CD4-positive, alpha-beta T cell (primary cell): ENCODE measurements at regions of chr17 and their contacts with region 1.

Region 1: GRCh38 chr17:8109661-8110464 is 8.5 kb downstream of the ALOXE3 start:
- DNase-seq: peak; percentile 76 to 91 (median 82)
- ATAC-seq: peak; percentile 99
- H3K4me3 ChIP-seq: peak overlapping the region; percentile 61
- H3K4me3 Mint-ChIP-seq: peak overlapping the region; percentile 45
- H3K27ac ChIP-seq: no peak overlapping the region
- H3K27ac Mint-ChIP-seq: peak overlapping the region; percentile 12
- H3K4me1 ChIP-seq: peaks cover 13% of the 10 kb centered on the region
- H3K4me1 Mint-ChIP-seq: peaks cover 4% of the 10 kb centered on the region
- H3K27me3 ChIP-seq: peaks cover 10 to 11% of the 10 kb centered on the region in 2 experiments
- H3K27me3 Mint-ChIP-seq: peaks cover 26% of the 10 kb centered on the region
- CTCF ChIP-seq: peak; percentile 97

Region 2: DNA sequence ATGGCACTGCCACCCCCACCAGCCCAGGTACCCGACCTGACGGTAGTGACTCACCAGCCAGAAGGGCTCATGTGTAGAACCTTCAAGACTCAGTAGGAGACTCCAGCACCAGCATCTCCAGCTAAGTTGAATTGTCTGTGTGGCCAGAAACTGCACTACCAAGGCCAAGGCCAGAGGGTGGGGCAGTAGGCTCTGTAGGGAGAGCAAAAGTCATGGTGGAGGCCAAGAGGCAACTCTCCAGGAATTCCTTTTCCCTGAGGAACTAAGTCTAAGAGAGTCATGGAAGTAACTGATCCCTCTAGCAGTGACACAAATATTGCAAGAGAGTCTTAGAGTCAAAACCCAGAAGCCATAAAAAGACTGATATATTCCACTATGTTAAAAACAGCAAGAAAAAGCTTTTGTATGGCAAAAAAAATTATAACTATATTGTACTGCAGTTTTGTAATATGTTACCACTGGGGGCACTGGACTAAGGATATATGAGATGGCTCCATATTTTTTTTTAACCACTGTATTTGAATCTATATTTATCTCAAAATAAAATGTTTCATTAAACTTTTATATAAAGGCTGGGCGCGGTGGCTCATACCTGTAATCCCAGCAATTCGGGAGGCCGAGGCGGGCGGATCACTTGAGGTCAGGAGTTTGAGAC is 137.6 kb before region 1 on chr17:
- CTCF ChIA-PET with region 1: no interaction called
- POLR2A ChIA-PET with region 1: no interaction called
- intact Hi-C with region 1: no loop called
- DNase-seq: no peak
- ATAC-seq: no peak
- H3K4me3 ChIP-seq: no peak overlapping the region
- H3K4me3 Mint-ChIP-seq: no peak overlapping the region
- H3K27ac ChIP-seq: no peak overlapping the region
- H3K27ac Mint-ChIP-seq: no peak overlapping the region
- H3K4me1 ChIP-seq: no peaks in the 10 kb centered on the region
- H3K4me1 Mint-ChIP-seq: no peaks in the 10 kb centered on the region
- H3K27me3 ChIP-seq: peaks cover 5 to 10% of the 10 kb centered on the region in 2 experiments
- H3K27me3 Mint-ChIP-seq: peaks cover 6% of the 10 kb centered on the region
- CTCF ChIP-seq: no peak

Region 3: DNA sequence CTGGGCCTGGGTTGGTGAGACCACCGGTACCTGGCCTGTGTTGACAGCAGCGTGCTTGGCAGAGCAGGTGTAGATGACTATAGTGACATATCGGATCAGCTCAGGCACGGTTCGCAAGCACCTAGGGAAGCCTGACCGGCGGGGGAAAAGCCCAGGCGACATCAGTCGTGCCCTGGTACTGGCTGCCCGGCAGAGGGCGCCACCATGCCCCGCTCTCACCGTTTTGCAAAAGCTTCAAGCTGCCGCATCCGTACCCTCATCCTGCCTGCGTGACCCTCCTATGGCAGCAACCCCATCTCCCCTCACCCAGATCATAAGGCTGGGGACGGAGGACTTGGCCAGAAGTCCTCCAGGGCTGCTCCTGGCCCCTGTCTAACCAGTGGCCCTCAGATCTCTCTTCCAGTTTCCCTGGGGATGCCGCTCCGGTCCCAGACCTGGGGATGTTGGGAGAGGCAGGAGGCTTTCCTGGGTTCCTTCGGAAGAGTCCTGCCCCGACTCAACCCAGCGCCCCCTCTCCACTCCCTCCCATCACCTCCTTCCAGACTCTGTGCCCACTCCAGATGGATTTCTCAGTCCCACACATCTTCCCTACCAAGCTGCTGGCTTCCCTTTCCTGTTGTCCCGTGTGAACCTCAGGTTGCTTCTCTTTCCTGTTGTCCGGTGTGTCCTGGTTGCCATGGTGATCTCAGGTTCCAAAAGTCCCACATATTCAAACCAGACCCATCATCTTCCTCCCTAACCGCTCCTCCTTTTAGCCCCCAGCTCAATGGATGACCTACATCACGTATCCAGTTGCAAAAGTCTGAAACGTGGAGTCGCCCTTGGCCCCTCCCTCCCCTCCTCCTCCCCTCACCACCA is 36.0 kb before region 1 on chr17:
- CTCF ChIA-PET with region 1: interaction called, 11 read pairs
- POLR2A ChIA-PET with region 1: interaction called, 4 read pairs
- intact Hi-C with region 1: no loop called
- DNase-seq: peak; percentile 75 to 95 (median 83)
- ATAC-seq: peak; percentile 94
- H3K4me3 ChIP-seq: peak overlapping the region; percentile 31
- H3K4me3 Mint-ChIP-seq: peak overlapping the region; percentile 87
- H3K27ac ChIP-seq: no peak overlapping the region
- H3K27ac Mint-ChIP-seq: peak overlapping the region; percentile 18
- H3K4me1 ChIP-seq: peaks cover 25% of the 10 kb centered on the region
- H3K4me1 Mint-ChIP-seq: peaks cover 26% of the 10 kb centered on the region
- H3K27me3 ChIP-seq: peaks cover 27 to 39% of the 10 kb centered on the region in 2 experiments
- H3K27me3 Mint-ChIP-seq: peaks cover 44% of the 10 kb centered on the region
- CTCF ChIP-seq: peak; percentile 91

Region 4: GRCh38 chr17:8079291-8080207 is 30.3 kb before region 1 on chr17:
- CTCF ChIA-PET with region 1: interaction called, 11 read pairs
- POLR2A ChIA-PET with region 1: interaction called, 4 read pairs
- intact Hi-C with region 1: loop called in 1 of 2 experiments (anchors 1 kb)
- DNase-seq: peak; percentile 66 to 92 (median 76)
- ATAC-seq: peak; percentile 80
- H3K4me3 ChIP-seq: peak overlapping the region; percentile 77
- H3K4me3 Mint-ChIP-seq: peak overlapping the region; percentile 92
- H3K27ac ChIP-seq: peak overlapping the region; percentile 52 to 70
- H3K27ac Mint-ChIP-seq: peak overlapping the region; percentile 76
- H3K4me1 ChIP-seq: peaks cover 20% of the 10 kb centered on the region
- H3K4me1 Mint-ChIP-seq: peaks cover 17% of the 10 kb centered on the region
- H3K27me3 ChIP-seq: peaks cover 4 to 6% of the 10 kb centered on the region in 2 experiments
- H3K27me3 Mint-ChIP-seq: peaks cover 7% of the 10 kb centered on the region
- CTCF ChIP-seq: peak; percentile 82

Region 5: DNA sequence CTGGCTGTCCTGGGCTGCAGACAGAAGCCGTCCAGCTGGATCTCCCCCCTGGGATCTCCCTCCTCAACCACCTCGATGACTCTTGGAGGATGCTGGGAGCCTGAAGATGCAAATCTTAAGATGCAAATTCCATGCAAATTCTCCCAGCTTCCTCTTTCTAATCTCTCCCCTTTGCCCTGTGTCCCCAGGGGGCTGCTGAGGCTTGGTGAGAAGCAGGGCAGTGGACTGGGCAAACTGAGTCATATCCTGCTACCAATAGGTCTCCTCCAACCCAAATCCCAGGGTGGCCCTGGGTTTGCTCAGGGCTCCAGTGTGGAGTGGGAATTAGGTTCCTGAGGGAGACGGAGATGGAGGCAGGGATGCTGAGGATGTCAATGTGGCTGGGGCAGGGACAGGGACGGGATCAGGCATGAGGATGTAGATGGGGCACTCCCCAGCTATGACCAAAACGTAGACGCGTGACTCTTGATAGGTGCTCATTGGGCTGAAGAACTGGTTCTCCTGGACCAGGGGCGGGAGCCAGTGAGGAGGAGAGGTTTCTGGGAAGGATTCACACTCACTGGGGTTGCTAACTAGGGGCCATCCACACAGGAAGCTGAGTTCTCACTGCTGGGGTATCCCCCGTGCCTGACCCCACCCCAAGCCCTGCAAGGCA is 18.7 kb before region 1 on chr17:
- CTCF ChIA-PET with region 1: interaction called, 12 read pairs
- POLR2A ChIA-PET with region 1: interaction called, 8 read pairs
- intact Hi-C with region 1: loop called (anchors 1 kb)
- DNase-seq: no peak
- ATAC-seq: no peak
- H3K4me3 ChIP-seq: no peak overlapping the region
- H3K4me3 Mint-ChIP-seq: no peak overlapping the region
- H3K27ac ChIP-seq: no peak overlapping the region
- H3K27ac Mint-ChIP-seq: no peak overlapping the region
- H3K4me1 ChIP-seq: peaks cover 13% of the 10 kb centered on the region
- H3K4me1 Mint-ChIP-seq: peaks cover 17% of the 10 kb centered on the region
- H3K27me3 ChIP-seq: peaks cover 4 to 8% of the 10 kb centered on the region in 2 experiments
- H3K27me3 Mint-ChIP-seq: peaks cover 26% of the 10 kb centered on the region
- CTCF ChIP-seq: no peak

Region 6: DNA sequence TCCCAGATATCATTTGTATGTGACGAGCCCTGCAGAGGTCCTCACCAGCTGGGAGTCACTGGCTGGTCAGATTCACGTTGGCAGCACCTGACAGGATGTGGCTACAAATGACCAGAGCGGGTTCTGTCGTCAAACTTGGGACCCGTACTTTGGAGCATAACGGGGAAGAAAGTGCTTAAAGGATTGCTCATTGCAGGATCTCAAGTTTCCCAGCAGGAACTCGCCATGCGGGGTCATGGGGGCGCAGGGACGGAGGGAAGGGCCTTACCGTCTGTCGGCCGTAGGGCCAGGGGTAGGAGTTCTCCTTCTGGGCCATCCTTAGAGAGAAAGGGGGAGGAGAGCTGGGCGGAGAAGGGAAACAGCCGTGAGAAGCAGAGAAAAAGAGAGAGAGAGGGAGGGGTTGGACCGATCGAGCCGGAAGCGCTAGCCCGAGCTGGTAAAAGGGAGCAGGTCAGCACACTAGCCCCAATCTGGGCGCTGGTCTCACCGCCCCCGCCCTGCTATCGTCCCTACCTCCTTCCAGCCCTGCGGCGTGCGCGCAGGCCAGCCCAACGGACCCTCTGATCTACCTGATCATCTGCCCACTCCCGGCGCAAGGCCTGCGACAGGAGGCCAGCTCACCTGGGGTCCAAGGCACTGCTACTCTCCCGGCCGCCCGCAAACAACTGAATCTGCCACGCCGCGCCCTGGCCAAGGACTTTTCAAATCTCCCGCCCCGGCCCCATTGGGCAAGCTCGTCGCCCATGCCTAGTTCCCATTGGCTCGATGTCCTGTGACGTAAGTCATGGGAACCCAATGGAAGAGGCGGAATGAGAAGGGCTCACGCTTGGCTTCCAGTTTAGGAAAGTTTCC is 100.3 kb after region 1 on chr17 and contains the start of gene AURKB:
- CTCF ChIA-PET with region 1: no interaction called
- POLR2A ChIA-PET with region 1: no interaction called
- intact Hi-C with region 1: no loop called
- DNase-seq: peak; percentile 84 to 97 (median 90)
- ATAC-seq: peak; percentile 100
- H3K4me3 ChIP-seq: peak within 1 kb of the TSS; percentile 76
- H3K4me3 Mint-ChIP-seq: peak within 1 kb of the TSS; percentile 90
- H3K27ac ChIP-seq: peak within 1 kb of the TSS; percentile 40 to 50
- H3K27ac Mint-ChIP-seq: peak within 1 kb of the TSS; percentile 27
- H3K4me1 ChIP-seq: peaks cover 16% of the 10 kb centered on the region
- H3K4me1 Mint-ChIP-seq: peaks cover 19% of the 10 kb centered on the region
- H3K27me3 ChIP-seq: no peaks in the 10 kb centered on the region
- H3K27me3 Mint-ChIP-seq: no peaks in the 10 kb centered on the region
- CTCF ChIP-seq: no peak
- total RNA-seq, gene AURKB: 0.56 to 1.4 TPM